HEK293 (cell line): ENCODE measurements at regions of chr10 and their contacts with region 1.

Region 1: DNA sequence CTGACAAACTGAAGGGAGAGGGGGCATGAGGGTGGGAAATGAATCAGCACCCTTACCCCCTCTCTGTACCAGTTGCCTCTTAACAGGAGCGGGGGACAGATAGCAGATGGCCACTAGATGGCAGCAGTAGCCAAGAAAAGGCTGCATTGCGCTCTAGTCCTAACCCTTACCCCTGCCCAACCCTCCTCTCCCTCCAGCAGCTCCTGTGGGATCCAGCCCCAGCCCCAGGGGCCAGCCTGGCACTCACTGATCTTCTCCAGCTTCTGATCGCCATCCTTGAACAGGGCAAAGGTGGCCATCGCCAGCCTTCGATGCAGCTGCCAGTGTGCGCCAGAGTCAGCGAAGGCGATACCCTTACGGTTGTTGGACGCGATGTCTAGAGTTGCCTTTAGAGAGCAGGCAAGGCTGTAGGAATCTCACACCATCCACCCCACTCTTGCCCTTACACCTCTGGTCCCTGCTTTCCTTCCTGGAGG is 2.2 kb downstream of the CYP17A1 start:
- H3K4me3 ChIP-seq: no peak overlapping the region
- H3K27ac ChIP-seq: no peak overlapping the region
- H3K4me1 ChIP-seq: peaks cover 6% of the 10 kb centered on the region; the same call in 1 of the 2 replicates
- CTCF ChIP-seq: peak; percentile 94

Region 2: GRCh38 chr10:102945449-102946361 is 110.7 kb after region 1 on chr10:
- CTCF ChIA-PET with region 1: no interaction called
- POLR2A ChIA-PET with region 1: no interaction called
- H3K4me3 ChIP-seq: no peak overlapping the region
- H3K27ac ChIP-seq: no peak overlapping the region; the same call in 1 of the 2 replicates
- H3K4me1 ChIP-seq: peaks cover 12% of the 10 kb centered on the region; the same call in 1 of the 2 replicates
- CTCF ChIP-seq: no peak

Region 3: GRCh38 chr10:103069453-103070331 is 234.6 kb after region 1 on chr10:
- CTCF ChIA-PET with region 1: interaction called, 27 read pairs
- POLR2A ChIA-PET with region 1: interaction called, 3 read pairs
- H3K4me3 ChIP-seq: no peak overlapping the region
- H3K27ac ChIP-seq: no peak overlapping the region
- H3K4me1 ChIP-seq: no peaks in the 10 kb centered on the region
- CTCF ChIP-seq: peak; percentile 53